Dorsolateral prefrontal cortex (tissue), 120 donors: ENCODE measurements at regions of chr19 and their contacts with region 1.

Region 1: DNA sequence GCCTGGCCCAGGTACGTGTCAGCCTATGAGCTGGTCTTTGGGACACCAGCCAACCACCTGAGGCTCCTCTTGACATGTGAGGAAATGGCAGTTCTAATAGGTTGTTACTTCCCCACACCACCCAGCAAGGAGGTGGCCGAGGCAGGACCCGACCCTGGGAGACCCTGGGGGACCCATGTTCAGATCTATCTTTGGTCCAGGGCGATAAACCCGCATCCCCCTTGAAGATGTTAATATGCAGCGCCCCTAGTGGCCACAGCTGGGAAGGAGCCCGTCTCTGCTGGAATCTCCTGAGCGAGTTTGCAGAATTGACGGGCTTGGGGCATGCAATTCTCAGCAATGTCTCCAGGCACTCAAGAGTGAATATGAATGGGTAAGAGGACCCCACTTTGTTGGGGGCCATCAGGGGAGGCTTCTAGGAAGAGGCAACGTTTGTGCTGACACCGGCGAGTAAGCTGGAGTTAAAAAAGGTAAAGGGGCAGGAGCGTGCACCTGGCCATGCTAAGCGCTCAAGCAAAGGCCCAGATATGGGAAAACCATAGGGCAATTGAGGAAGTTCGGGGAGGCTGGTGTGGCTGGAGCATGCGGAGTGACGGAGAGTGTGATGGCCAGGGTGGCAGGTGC is 1.5 kb upstream of the MYO1F start:
- DNase-seq: peak in 8 of 10 donors; percentile 36 to 82 (median 73)
- H3K4me3 ChIP-seq: no peak overlapping the region
- H3K27ac ChIP-seq: no peak overlapping the region
- H3K27me3 ChIP-seq: peaks cover 0 to 7% (median 0%) of the 10 kb centered on the region in 45 donors
- CTCF ChIP-seq: peak; percentile 67 to 95 (median 88)

Region 2: DNA sequence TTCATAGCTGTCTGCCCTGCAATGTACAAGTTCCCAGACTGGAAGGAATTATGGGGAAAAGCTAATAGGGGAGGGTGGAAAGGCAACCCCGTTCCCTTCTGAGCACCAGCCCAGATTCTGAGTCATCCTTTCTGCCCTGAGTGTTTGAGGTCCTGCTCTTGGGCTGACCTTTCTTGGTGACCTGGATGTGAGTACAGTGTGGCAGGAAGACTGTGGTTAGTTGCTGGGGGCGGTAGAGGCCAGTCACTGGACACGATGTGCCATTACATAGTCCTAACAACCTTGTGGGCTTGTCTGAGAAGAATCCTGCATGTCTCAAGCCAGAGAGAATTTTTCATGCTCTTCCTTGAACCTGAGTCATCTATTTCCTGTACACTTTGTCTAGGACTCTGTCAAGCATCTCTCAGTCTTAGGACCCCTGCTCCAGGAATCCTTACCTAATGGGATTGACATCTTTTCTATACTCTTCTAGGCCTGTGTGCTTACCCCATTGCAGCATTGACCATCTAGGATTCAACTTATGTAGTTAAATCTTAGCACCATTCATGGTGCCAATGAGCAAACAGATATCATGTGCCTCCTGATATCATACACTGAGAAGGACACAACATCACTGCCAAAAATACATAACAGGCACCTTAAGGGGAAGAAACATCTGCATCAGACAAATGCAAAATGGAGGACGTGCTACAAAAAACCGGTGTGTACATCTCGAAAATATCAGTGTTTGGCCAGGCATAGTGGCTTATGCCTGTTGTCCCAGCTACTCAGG is 222.9 kb before region 1 on chr19:
- intact Hi-C with region 1: loop called in 1 of 2 experiments (anchors 10 kb)
- DNase-seq: no peak
- H3K4me3 ChIP-seq: no peak overlapping the region
- H3K27ac ChIP-seq: peak overlapping the region in 1 of 59 donors; percentile 10
- H3K27me3 ChIP-seq: peaks cover 0 to 6% (median 0%) of the 10 kb centered on the region in 45 donors
- CTCF ChIP-seq: no peak

Region 3: DNA sequence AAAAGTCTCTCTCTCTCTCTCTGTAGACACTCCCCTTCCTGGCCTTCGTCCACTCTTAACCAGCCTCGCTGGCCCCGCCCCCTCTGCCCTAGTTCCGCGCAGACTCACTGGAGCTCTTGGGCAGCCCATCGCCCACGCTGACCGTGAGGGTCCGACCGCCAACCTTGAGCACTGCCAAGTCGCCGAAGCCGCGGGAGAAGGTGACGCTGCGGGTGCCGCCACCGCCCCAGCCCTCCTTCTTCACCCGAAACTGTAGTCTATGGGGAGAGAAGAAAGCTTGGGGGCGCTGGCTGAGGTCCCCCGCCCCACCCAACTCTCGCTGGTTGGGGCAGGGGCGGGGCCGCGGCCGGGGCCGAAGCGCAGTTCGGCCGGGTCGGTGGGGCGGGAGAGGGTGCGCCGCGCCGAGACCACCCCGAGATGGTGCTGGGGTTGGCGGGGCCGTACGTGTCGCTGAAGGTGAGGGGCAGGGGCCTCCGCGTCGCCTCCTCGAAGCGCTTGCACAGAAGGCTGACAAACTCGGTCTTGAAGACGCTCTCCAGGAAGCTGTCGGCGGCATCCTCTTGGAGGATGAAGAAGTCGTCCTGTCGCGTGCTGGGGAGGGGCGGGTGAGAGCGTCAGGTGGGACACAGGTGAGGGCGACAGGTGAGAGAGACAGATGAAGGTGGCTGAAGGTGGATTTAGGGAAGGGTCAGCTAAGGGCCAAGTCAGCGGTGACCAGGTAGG is 52.2 kb before region 1 on chr19:
- intact Hi-C with region 1: loop called in 1 of 2 experiments (anchors 5 kb)
- DNase-seq: peak; percentile 83 to 92 (median 87)
- H3K4me3 ChIP-seq: peak overlapping the region; percentile 59 to 93 (median 78)
- H3K27ac ChIP-seq: peak overlapping the region in 58 of 59 donors; percentile 41 to 94 (median 84)
- H3K27me3 ChIP-seq: no peaks in the 10 kb centered on the region
- CTCF ChIP-seq: peak in 5 of 56 donors; percentile 3 to 23 (median 13)

Region 4: DNA sequence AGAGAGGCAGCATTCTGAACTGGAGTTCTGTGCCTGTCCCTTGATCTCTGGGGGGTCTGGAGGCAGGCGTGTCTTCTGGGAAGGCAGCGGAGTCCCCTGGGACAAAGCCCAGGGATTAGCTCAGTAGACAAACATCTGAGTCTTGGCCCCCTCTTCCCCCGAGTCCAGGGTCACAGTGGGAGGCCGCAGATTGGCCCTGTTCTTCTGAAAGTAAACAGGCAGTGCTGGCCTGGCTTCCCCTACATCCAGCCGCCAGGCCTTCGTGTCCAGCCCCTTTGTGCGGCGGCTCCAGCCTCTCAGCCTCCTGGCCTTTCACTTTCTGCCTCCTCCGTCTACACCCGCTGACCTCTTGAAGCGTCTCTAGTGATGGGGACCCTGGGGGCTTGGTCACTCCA is 52.7 kb after region 1 on chr19:
- intact Hi-C with region 1: no loop called
- DNase-seq: peak in 3 of 10 donors; percentile 35 to 58 (median 50)
- H3K4me3 ChIP-seq: no peak overlapping the region
- H3K27ac ChIP-seq: peak overlapping the region in 29 of 59 donors; percentile 4 to 78 (median 46)
- H3K27me3 ChIP-seq: no peaks in the 10 kb centered on the region
- CTCF ChIP-seq: no peak